Mammary epithelial cell (primary cell): ENCODE measurements at regions of chr7 and their contacts with region 1.

Region 1: DNA sequence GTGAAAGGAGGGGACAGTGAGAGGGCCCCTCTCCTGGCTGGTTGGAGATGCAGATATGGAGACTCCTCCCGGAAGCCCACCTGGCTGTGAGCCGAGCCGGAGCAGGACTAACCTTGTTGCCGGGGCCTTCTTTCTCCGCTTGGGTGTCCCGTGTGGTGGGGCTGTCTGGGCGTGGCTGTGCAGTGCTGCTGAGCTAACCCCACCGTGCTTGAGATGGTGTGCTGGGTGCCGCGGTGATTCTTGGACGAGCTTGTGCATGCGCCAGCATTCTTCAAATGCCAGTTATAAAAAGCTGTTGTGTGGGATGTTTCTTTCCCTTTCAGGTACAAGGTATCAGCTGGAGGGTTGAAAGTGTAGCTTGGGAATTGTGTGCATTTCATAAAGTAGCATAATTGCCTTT is 48.8 kb downstream of the DAGLB start:
- DNase-seq: peak; percentile 80
- H3K4me3 ChIP-seq: peak overlapping the region; percentile 24 to 38 (median 32)
- H3K27ac ChIP-seq: peak overlapping the region; percentile 70
- H3K4me1 ChIP-seq: peaks cover 45% of the 10 kb centered on the region
- H3K27me3 ChIP-seq: no peaks in the 10 kb centered on the region
- CTCF ChIP-seq: no peak

Region 2: DNA sequence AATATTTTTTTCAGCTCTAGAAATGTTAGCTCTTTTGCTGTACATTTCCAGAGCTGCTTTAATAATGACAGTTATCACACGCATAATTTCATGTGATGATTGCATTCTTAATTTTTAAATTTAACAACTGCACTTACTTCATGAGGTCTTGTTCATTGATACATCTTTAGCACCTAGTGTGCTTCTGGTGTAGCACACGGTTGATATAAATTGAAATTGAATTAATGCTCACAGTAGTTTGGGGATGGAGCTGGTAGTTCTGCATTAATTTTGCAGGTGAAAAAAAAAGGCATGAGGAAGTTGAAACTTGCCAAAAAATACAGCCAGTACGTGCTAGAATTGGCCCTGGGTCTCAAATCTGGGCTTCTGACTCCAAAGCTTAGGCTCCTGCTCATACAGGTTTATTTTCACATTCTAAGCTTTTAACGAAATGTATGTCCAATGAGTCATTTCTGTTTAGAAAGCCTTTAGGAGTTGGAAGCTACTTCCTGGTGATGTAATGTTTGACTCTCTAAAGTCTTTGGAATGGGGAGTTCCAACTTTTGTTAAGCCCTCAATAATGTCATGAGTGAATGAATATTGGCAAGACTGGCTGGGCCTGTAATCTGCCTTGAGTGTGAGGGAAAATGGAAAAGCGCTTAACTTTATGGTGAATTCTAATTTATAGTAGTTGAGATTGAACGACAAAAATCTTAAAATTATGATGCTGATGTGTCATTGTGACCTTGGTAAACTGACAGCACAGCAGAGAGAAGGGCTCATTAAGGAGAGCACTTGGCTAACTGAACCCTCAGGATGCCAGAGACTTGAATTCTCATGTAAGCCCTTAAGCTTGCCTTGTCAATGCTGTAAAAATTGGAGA is 13.6 kb before region 1 on chr7:
- CTCF ChIA-PET with region 1: no interaction called
- dilution Hi-C with region 1: no loop called
- in situ Hi-C with region 1: no loop called
- intact Hi-C with region 1: loop called (anchors 2 kb)
- DNase-seq: peak; percentile 97
- H3K4me3 ChIP-seq: no peak overlapping the region
- H3K27ac ChIP-seq: peak overlapping the region; percentile 92
- H3K4me1 ChIP-seq: peaks cover 27% of the 10 kb centered on the region
- H3K27me3 ChIP-seq: no peaks in the 10 kb centered on the region
- CTCF ChIP-seq: no peak

Region 3: DNA sequence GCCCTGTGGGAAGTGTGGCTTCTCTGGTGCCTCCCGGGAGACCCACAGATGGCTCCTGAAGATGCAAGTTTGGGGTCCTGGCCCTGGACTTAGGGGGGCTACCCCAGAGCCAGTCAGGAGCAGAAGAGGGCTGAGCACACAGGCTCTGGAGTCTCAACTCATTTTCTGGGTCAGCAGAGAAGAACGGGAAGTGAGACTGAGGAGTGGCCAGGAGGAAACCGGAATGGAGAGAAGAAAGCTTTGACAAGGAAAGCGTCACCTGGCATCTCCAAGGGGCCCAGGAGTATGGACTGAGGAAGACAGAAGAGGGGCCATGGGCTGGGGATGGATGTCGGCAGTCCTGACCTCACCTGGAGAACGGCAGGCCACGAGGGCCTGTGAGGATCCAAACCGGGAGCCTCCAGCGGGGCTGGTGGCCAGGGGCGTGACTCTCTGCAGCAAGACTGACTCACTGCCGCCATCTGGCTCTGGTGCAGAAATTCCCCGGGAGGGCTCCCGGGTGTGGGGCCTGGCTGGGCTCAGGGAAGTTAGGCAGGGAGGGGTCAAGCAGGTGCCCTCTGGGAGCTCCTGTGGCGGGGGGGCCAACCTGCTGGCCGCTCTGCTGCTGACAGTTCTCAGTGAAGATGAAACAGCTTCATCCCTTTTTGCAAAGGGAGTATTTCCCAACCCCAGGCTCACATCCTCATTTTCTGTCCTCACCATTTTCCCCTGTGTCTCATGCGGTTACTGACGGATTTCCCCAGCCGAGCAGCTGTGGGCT is 25.2 kb after region 1 on chr7:
- CTCF ChIA-PET with region 1: no interaction called
- dilution Hi-C with region 1: no loop called
- in situ Hi-C with region 1: no loop called
- intact Hi-C with region 1: no loop called
- DNase-seq: peak; percentile 61
- H3K4me3 ChIP-seq: no peak overlapping the region
- H3K27ac ChIP-seq: no peak overlapping the region
- H3K4me1 ChIP-seq: no peaks in the 10 kb centered on the region
- H3K27me3 ChIP-seq: no peaks in the 10 kb centered on the region
- CTCF ChIP-seq: peak in 1 of 2 donors; percentile 35